ENCODE measurements at regions of chr5 and their contacts with region 1.

Region 1: DNA sequence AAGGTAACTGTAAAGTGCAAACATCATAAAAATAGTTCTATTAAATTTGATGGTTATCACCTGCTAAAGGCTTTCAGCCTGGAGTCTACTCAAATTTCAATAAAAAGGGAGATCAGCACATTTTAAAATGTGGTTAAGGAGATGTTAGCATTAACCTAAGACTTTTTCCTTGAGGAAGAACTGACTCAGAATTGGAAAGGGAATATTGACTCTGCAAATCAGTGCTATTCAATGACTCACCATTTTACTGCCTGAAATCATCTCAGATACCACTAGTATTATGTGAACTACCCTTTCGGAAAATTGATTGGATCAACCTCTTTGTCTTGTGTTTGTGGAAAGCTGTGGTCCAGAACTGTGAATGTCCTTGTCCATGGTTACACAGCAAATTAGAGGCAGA is 113.3 kb downstream of the ADRB2 start:
- DNase-seq: peak in 1 of 2 experiments; percentile 93
- H3K4me3 ChIP-seq: no peak overlapping the region
- H3K27ac ChIP-seq: peak overlapping the region; percentile 54
- H3K4me1 ChIP-seq: peaks cover 16% of the 10 kb centered on the region
- H3K27me3 ChIP-seq: no peaks in the 10 kb centered on the region
- CTCF ChIP-seq: no peak

Region 2: GRCh38 chr5:148499452-148499851 is 440.2 kb before region 1 on chr5:
- CTCF ChIA-PET with region 1: no interaction called
- POLR2A ChIA-PET with region 1: no interaction called
- intact Hi-C with region 1: no loop called
- DNase-seq: no peak
- H3K4me3 ChIP-seq: no peak overlapping the region
- H3K27ac ChIP-seq: no peak overlapping the region
- H3K4me1 ChIP-seq: no peaks in the 10 kb centered on the region
- H3K27me3 ChIP-seq: no peaks in the 10 kb centered on the region
- CTCF ChIP-seq: no peak

Region 3: GRCh38 chr5:149887622-149888183 is 948.0 kb after region 1 on chr5:
- CTCF ChIA-PET with region 1: no interaction called
- POLR2A ChIA-PET with region 1: interaction called, 16 read pairs
- intact Hi-C with region 1: no loop called
- DNase-seq: peak; percentile 58 to 68
- H3K4me3 ChIP-seq: no peak overlapping the region
- H3K27ac ChIP-seq: no peak overlapping the region
- H3K4me1 ChIP-seq: peaks cover 3% of the 10 kb centered on the region; the same call in 1 of the 2 replicates
- H3K27me3 ChIP-seq: no peaks in the 10 kb centered on the region
- CTCF ChIP-seq: no peak

Measured in PC-9 (cell line).